ENCODE measurements at regions of chr10 and their contacts with region 1.

Region 1: GRCh38 chr10:97498076-97498840 is at the start of gene MMS19:
- DNase-seq: peak; percentile 100
- ATAC-seq: peak; percentile 88
- H3K4me3 Mint-ChIP-seq: peak within 1 kb of the TSS; percentile 81
- H3K27ac Mint-ChIP-seq: peak within 1 kb of the TSS; percentile 91
- H3K4me1 Mint-ChIP-seq: peaks cover 59% of the 10 kb centered on the region
- H3K27me3 Mint-ChIP-seq: peaks cover 21% of the 10 kb centered on the region
- CTCF ChIP-seq: no peak
- total RNA-seq, gene MMS19: 135 to 153 TPM (median 141 TPM) in 3 replicates

Region 2: GRCh38 chr10:97217299-97217698 is 281.0 kb before region 1 on chr10:
- CTCF ChIA-PET with region 1: no interaction called
- POLR2A ChIA-PET with region 1: no interaction called
- DNase-seq: no peak
- ATAC-seq: no peak
- H3K4me3 Mint-ChIP-seq: no peak overlapping the region
- H3K27ac Mint-ChIP-seq: no peak overlapping the region
- H3K4me1 Mint-ChIP-seq: no peaks in the 10 kb centered on the region; the same call in 1 of the 2 replicates
- H3K27me3 Mint-ChIP-seq: no peaks in the 10 kb centered on the region
- CTCF ChIP-seq: no peak

Region 3: GRCh38 chr10:97463363-97464132 is 34.7 kb before region 1 on chr10:
- CTCF ChIA-PET with region 1: interaction called, 10 read pairs
- POLR2A ChIA-PET with region 1: no interaction called
- DNase-seq: peak; percentile 52
- ATAC-seq: peak; percentile 91
- H3K4me3 Mint-ChIP-seq: no peak overlapping the region
- H3K27ac Mint-ChIP-seq: peak overlapping the region; percentile 60
- H3K4me1 Mint-ChIP-seq: no peaks in the 10 kb centered on the region
- H3K27me3 Mint-ChIP-seq: no peaks in the 10 kb centered on the region
- CTCF ChIP-seq: peak; percentile 79

Region 4: GRCh38 chr10:97508342-97508741 is 10.1 kb after region 1 on chr10:
- CTCF ChIA-PET with region 1: interaction called, 10 read pairs
- POLR2A ChIA-PET with region 1: interaction called, 4 read pairs
- DNase-seq: no peak
- ATAC-seq: peak; percentile 76
- H3K4me3 Mint-ChIP-seq: no peak overlapping the region
- H3K27ac Mint-ChIP-seq: 0 out of 2 replicates have a peak overlapping the region, but pooled peaks have one; percentile 64
- H3K4me1 Mint-ChIP-seq: peaks cover 24% of the 10 kb centered on the region
- H3K27me3 Mint-ChIP-seq: no peaks in the 10 kb centered on the region
- CTCF ChIP-seq: no peak

Region 5: GRCh38 chr10:97518301-97519043 is 20.2 kb after region 1 on chr10:
- CTCF ChIA-PET with region 1: interaction called, 15 read pairs
- POLR2A ChIA-PET with region 1: interaction called, 4 read pairs
- DNase-seq: no peak
- ATAC-seq: peak; percentile 56
- H3K4me3 Mint-ChIP-seq: no peak overlapping the region
- H3K27ac Mint-ChIP-seq: peak overlapping the region; percentile 55; the same call in 1 of the 2 replicates
- H3K4me1 Mint-ChIP-seq: peaks cover 43% of the 10 kb centered on the region
- H3K27me3 Mint-ChIP-seq: no peaks in the 10 kb centered on the region; the same call in 1 of the 2 replicates
- CTCF ChIP-seq: no peak

Region 6: GRCh38 chr10:97534746-97535367 is 36.6 kb after region 1 on chr10:
- CTCF ChIA-PET with region 1: interaction called, 36 read pairs
- POLR2A ChIA-PET with region 1: interaction called, 3 read pairs
- DNase-seq: peak; percentile 68
- ATAC-seq: peak; percentile 82
- H3K4me3 Mint-ChIP-seq: no peak overlapping the region
- H3K27ac Mint-ChIP-seq: peak overlapping the region; percentile 86
- H3K4me1 Mint-ChIP-seq: peaks cover 15% of the 10 kb centered on the region
- H3K27me3 Mint-ChIP-seq: no peaks in the 10 kb centered on the region
- CTCF ChIP-seq: peak; percentile 69

Region 7: GRCh38 chr10:97543025-97543575 is 44.8 kb after region 1 on chr10:
- CTCF ChIA-PET with region 1: interaction called, 11 read pairs
- POLR2A ChIA-PET with region 1: interaction called, 3 read pairs
- DNase-seq: no peak
- ATAC-seq: no peak
- H3K4me3 Mint-ChIP-seq: no peak overlapping the region
- H3K27ac Mint-ChIP-seq: peak overlapping the region; percentile 5
- H3K4me1 Mint-ChIP-seq: peaks cover 32% of the 10 kb centered on the region
- H3K27me3 Mint-ChIP-seq: no peaks in the 10 kb centered on the region
- CTCF ChIP-seq: no peak

Region 8: DNA sequence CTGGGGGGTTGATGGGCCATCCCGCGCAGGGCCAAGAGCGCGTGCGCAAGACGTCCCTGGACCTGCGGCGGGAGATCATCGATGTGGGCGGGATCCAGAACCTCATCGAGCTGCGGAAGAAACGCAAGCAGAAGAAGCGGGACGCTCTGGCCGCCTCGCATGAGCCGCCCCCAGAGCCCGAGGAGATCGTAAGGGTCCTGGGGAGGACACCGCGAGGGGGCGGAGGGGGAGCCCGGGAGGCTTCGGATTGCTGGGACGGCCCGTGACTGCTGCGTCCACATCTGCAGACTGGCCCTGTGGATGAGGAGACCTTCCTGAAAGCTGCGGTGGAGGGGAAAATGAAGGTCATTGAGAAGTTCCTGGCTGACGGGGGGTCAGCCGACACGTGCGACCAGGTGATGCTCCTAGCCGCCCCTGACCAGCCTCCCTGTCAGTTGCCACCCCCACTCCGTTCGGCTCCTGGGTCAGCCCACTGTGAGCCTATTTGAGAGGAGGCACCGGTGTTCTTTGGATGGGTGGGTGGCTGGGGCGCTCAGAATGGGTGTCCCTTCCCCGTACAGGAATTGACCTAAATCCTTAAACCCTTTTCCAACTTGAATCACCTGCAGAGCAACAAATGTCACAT is 80.1 kb after region 1 on chr10:
- CTCF ChIA-PET with region 1: no interaction called
- POLR2A ChIA-PET with region 1: no interaction called
- DNase-seq: no peak
- ATAC-seq: no peak
- H3K4me3 Mint-ChIP-seq: no peak overlapping the region
- H3K27ac Mint-ChIP-seq: no peak overlapping the region
- H3K4me1 Mint-ChIP-seq: peaks cover 5% of the 10 kb centered on the region
- H3K27me3 Mint-ChIP-seq: no peaks in the 10 kb centered on the region
- CTCF ChIP-seq: no peak

Measured in WTC11 (cell line).